ENCODE measurements at regions of chr12 and their contacts with region 1.

Region 1: GRCh38 chr12:58387199-58387598 is 445.8 kb downstream of the ATP23 start:
- DNase-seq: no peak
- ATAC-seq: no peak
- H3K4me3 ChIP-seq: no peak overlapping the region
- H3K27ac ChIP-seq: no peak overlapping the region
- H3K4me1 ChIP-seq: no peaks in the 10 kb centered on the region
- H3K27me3 ChIP-seq: no peaks in the 10 kb centered on the region
- CTCF ChIP-seq: no peak
- POLR2A ChIP-seq: no peak

Region 2: GRCh38 chr12:58364389-58365086 is 22.7 kb before region 1 on chr12:
- intact Hi-C with region 1: loop called in 1 of 10 experiments (anchors 1 kb)
- DNase-seq: no peak
- ATAC-seq: no peak
- H3K4me3 ChIP-seq: no peak overlapping the region
- H3K27ac ChIP-seq: no peak overlapping the region
- H3K4me1 ChIP-seq: no peaks in the 10 kb centered on the region
- H3K27me3 ChIP-seq: no peaks in the 10 kb centered on the region
- CTCF ChIP-seq: no peak
- POLR2A ChIP-seq: no peak

Region 3: GRCh38 chr12:58584880-58585279 is 197.7 kb after region 1 on chr12:
- intact Hi-C with region 1: no loop called
- DNase-seq: no peak
- ATAC-seq: peak in 2 of 4 donors; percentile 11 to 22
- H3K4me3 ChIP-seq: no peak overlapping the region
- H3K27ac ChIP-seq: peak overlapping the region in 1 of 12 donors; percentile 50
- H3K4me1 ChIP-seq: peaks cover 0 to 14% (median 0%) of the 10 kb centered on the region in 12 donors
- H3K27me3 ChIP-seq: peaks cover 0 to 4% (median 0%) of the 10 kb centered on the region in 9 donors
- CTCF ChIP-seq: no peak
- POLR2A ChIP-seq: no peak